RWPE1 (cell line): ENCODE measurements at regions of chr19 and their contacts with region 1.

Region 1: DNA sequence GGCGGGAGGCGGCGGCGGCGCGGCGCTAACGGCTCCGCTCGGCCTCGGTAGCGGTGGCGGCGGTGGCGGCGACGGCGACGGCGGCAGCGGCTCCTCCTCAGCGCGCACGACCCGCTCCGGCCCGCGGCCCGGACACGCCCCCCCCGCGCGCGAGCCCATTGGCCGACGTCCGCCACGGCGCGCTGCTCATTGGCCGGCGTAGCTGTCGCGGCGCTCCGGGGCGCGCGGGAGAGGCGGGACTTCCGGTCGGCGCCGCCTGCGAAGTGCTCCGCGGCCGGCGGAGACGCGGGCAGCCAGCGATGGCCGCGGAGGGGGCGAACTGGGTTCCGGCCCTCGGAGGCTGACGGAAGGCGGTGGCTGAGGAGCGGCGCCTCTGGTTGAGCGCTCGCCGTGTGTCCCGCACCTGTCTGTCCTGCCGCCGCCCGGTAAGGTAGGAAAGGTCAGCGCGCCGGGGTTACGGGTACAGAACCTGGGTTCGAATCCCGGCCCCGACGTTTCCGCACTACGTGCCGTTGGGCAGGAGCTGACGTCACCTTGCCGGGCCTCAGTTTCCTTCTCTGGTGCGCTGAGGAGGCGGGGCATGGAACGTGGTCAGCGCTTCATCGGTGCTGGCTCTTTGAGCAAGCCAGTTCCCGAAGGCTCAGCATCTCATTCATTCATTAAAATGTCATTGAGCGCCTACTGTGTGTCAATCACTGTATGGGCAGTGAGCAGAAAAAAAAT is at the start of gene ELAVL1:
- DNase-seq: peak; percentile 91
- H3K27ac ChIP-seq: peak within 1 kb of the TSS; percentile 81
- CTCF ChIP-seq: no peak

Region 2: DNA sequence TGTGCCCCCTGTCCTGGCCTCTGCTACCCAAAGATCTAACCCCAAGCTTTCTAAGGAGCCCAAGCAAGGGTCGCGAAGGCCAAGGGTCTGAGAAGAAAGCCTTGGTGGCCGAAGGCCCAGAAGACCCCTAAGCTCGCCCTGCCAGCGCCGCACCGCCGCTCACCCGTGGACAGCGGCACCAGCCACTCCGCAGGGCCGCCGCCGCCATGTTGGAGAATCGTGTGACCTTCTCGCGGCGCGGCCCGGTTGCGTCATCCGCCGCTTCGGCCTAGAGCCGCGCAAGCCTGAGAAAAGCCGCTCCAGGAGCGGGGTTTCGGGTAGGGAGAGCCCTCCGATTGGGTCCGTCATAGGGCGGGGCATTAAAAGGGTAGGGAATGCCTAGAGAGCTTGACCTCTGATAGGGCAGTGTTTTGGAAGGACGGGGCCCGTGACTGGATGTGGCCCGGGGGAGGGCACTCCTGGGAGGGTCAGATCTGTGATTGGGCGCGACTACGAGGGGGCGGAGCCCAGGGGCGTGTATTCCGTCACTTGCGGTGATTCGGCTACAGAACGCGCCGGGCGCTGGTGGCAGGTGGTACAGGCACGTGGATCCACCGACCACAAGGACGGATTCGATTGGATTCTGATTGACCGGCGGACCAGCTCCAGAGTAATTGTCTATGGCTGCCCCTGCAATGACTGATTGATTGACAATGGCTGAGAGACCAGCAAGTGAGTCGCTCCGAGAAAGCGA is 62.1 kb before region 1 on chr19 and contains the start of gene TIMM44:
- CTCF ChIA-PET with region 1: interaction called, 21 read pairs
- POLR2A ChIA-PET with region 1: interaction called, 6 read pairs
- DNase-seq: peak; percentile 99
- H3K27ac ChIP-seq: peak within 1 kb of the TSS; percentile 86
- CTCF ChIP-seq: no peak

Region 3: DNA sequence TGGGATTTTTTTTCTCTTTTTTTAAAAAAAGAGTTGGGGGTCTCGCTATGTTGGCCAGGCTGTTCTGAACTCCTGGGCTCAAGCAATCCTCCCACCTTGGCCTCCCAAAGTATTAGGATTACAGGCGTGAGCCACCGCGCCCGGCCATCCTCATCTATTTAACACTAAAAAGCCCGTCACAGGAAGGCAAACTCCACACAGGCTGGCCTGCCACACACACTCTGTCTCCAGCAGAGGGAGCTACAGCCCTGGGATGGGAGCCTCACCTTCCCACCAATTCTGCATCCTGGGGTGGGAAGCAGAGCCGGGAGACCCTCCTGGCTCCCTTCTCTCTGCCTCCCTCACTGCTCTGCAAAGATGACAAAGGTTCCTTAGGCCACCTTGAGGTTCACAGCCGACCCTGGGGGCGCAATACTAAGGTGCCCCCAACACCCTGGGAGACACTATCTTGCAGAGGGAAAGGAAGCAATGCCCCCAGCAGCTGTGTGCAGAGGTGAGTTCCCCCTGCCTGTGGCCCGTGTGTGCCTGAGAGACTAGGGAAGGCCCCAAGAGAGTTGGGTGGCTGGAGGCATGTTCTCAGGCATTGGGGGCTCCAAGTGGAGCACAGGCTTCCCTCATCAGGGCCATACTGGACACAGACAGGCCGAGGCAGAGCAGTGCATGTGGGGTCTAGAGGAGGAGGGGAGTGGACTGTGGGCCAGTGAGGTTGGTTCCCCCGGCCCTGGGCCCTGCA is 34.8 kb before region 1 on chr19:
- CTCF ChIA-PET with region 1: interaction called, 15 read pairs
- POLR2A ChIA-PET with region 1: no interaction called
- DNase-seq: peak; percentile 44
- H3K27ac ChIP-seq: peak overlapping the region; percentile 56
- CTCF ChIP-seq: peak; percentile 78

Region 4: DNA sequence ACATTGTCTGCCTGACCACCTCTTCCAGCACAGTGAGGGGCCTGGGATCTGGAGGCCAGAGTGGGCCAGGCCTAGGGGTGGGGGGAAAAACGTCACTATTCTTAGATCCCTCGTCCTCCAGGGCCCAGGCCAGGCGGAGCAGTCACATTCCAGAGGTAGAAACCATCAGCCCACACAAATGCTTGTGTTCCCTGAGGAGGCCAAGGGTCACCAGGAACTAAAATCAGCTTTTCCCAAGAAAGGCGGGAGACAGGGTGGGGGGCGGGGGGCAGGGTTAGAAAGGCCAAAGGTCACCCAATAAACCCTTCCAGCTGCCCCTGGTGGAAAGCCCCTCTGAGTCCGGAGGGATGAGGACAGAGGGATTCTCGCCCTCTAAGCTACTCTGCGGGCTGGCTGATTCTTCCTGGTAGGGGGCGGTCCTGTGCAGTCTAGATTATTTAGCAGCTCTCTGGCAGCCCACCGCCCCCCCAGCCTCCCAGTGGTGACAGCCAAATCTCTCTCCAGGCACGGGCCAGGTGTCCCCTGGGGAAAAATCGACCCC is 23.3 kb after region 1 on chr19:
- CTCF ChIA-PET with region 1: no interaction called
- POLR2A ChIA-PET with region 1: interaction called, 11 read pairs
- DNase-seq: no peak
- H3K27ac ChIP-seq: no peak overlapping the region
- CTCF ChIP-seq: no peak